ENCODE measurements at regions of chr15 and their contacts with region 1.

Region 1: GRCh38 chr15:46231786-46232185 is 597.0 kb downstream of the SQOR start:
- DNase-seq: no peak
- ATAC-seq: no peak
- H3K4me3 ChIP-seq: no peak overlapping the region
- H3K27ac ChIP-seq: no peak overlapping the region
- H3K4me1 ChIP-seq: no peaks in the 10 kb centered on the region
- H3K27me3 ChIP-seq: no peaks in the 10 kb centered on the region
- CTCF ChIP-seq: no peak
- EP300 ChIP-seq: no peak
- POLR2A ChIP-seq: no peak
- RAD21 ChIP-seq: no peak

Region 2: GRCh38 chr15:46170326-46170725 is 61.5 kb before region 1 on chr15:
- CTCF ChIA-PET with region 1: no interaction called
- POLR2A ChIA-PET with region 1: no interaction called
- RAD21 ChIA-PET with region 1: no interaction called
- SMC1A ChIA-PET with region 1: no interaction called
- in situ Hi-C with region 1: loop called (anchors 10 kb)
- intact Hi-C with region 1: no loop called
- DNase-seq: no peak
- ATAC-seq: no peak
- H3K4me3 ChIP-seq: no peak overlapping the region
- H3K27ac ChIP-seq: no peak overlapping the region
- H3K4me1 ChIP-seq: no peaks in the 10 kb centered on the region
- H3K27me3 ChIP-seq: no peaks in the 10 kb centered on the region
- CTCF ChIP-seq: no peak
- EP300 ChIP-seq: no peak
- POLR2A ChIP-seq: no peak
- RAD21 ChIP-seq: no peak

Region 3: GRCh38 chr15:46293550-46293949 is 61.8 kb after region 1 on chr15:
- CTCF ChIA-PET with region 1: no interaction called
- POLR2A ChIA-PET with region 1: no interaction called
- RAD21 ChIA-PET with region 1: no interaction called
- SMC1A ChIA-PET with region 1: no interaction called
- in situ Hi-C with region 1: no loop called
- intact Hi-C with region 1: no loop called
- DNase-seq: no peak
- ATAC-seq: no peak
- H3K4me3 ChIP-seq: no peak overlapping the region
- H3K27ac ChIP-seq: no peak overlapping the region
- H3K4me1 ChIP-seq: no peaks in the 10 kb centered on the region
- H3K27me3 ChIP-seq: no peaks in the 10 kb centered on the region
- CTCF ChIP-seq: no peak
- EP300 ChIP-seq: no peak
- POLR2A ChIP-seq: no peak
- RAD21 ChIP-seq: no peak

Measured in GM12878 (cell line).